Posterior cingulate gyrus (tissue), 11 donors: ENCODE measurements at regions of chr5 and their contacts with region 1.

Region 1: DNA sequence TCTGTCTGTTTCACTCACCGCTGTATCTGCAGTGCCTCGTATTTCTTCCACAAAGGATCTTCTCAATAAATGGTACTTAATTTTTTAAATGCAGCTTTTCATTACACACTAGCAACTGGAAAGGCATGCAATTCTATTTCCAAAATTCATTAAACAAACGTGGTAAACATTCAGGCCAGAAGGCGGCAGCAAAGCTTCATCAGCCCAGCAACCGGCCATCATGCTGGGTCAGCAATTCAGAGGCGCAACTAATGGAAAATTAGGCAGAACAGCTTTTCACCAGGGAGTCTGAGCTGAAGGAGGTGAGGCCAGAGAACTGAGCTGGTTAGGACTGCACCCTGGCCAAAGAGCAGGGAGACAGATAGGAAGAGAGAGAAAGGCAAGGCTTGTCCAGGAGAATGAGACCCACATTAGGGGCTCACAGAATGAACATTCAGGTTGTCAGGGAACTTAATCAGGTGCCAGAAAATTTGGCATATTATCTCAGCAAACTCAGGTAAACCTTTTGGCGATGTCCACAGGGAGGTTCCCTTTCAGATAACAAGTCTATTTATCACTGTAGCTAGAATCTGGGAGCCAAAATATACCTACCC is 17.7 kb upstream of the RNF180 start:
- DNase-seq: peak; percentile 46 to 93 (median 68)

Region 2: GRCh38 chr5:64207978-64208377 is 60.0 kb after region 1 on chr5:
- intact Hi-C with region 1: loop called (anchors 5 kb)
- DNase-seq: no peak

Region 3: DNA sequence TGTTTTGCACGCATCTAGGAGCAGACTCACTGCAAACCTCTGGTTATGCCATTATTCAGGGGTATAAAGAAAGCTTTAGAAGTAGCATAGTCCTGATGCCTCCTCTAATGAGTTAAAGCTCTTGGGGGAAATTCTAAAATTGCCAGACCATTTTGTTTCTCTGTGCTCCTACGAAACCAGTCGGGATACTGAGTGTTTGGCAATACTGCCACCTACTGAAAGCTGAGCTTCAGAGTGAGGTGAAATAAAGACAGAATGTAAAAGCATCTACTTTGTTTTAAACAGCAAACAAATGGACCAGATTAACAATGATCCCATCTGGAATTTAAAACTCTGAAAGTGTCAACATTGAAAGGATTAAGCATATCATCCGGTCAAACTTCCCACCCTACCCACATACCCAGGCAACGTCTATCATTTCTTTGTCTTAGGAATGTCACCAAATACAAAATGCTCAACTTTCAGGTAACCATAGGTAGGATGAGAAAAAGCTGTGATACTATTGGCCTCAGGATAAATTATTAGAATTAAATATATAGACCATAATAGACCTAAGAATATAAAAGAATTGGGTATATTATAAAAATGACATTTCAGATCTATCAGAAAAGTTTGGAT is 464.5 kb after region 1 on chr5:
- intact Hi-C with region 1: loop called (anchors 2 kb)
- DNase-seq: peak in 3 of 10 donors; percentile 26 to 53 (median 26)

Region 4: GRCh38 chr5:64784451-64785025 is 636.6 kb after region 1 on chr5:
- intact Hi-C with region 1: loop called (anchors 10 kb)
- DNase-seq: peak in 7 of 10 donors; percentile 64 to 93 (median 70)